ENCODE measurements at regions of chr10 and their contacts with region 1.

Region 1: GRCh38 chr10:114304017-114304570 is 65.0 kb downstream of the VWA2 start:
- DNase-seq: peak in 3 of 4 donors; percentile 67 to 91 (median 82)
- ATAC-seq: peak; percentile 94
- H3K4me3 ChIP-seq: peak overlapping the region; percentile 17 to 35
- H3K27ac ChIP-seq: peak overlapping the region in 1 of 2 donors; percentile 2
- H3K4me1 ChIP-seq: peaks cover 7 to 9% of the 10 kb centered on the region in 2 donors
- H3K27me3 ChIP-seq: no peaks in the 10 kb centered on the region
- CTCF ChIP-seq: peak; percentile 69 to 80

Region 2: DNA sequence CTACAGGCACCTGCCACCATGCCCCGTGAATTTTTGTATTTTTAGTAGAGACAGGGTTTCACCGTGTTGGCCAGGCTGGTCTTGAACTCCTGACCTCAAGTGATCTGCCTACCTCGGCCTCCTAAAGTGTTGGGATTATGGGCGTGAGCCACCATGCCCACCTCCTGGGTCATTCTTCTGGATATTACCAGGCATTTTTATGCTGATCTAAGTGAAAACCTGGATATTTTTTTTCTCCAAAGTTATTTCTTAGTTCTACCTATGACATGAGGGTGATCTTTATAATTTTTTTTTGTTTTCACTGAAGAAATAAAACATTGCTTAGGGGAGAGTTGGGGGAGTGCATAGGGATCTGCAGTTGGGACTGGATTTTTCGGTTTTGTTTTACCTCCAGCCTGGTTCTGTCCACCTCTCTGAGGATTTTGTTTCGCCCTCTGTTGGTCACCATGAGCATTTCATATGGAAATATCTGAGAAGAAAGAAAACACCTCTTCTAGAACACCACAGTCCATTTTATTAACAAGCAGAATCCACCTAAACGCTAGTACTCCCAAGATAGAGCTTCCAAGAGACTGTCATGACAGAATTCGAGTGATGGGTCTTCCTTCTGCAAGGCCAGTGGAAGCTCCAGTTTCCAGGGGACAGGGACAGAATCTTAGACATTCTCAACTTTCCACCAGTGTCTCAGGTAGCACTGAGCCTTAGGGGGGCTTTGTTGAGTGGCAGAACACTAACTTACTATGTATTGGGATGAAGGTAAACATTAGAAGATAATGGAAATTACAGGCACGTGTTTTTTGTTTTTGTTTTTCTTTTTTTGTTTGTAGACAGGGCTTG is 133.6 kb after region 1 on chr10:
- intact Hi-C with region 1: loop called in 1 of 2 experiments (anchors 10 kb)
- DNase-seq: peak in 1 of 4 donors; percentile 13
- ATAC-seq: no peak
- H3K4me3 ChIP-seq: no peak overlapping the region
- H3K27ac ChIP-seq: no peak overlapping the region
- H3K4me1 ChIP-seq: no peaks in the 10 kb centered on the region
- H3K27me3 ChIP-seq: no peaks in the 10 kb centered on the region
- CTCF ChIP-seq: peak; percentile 22 to 26